ENCODE measurements at regions of chr14 and their contacts with region 1.

Region 1: GRCh38 chr14:89936658-89937185 is 17.8 kb downstream of the EFCAB11 start:
- DNase-seq: no peak
- ATAC-seq: no peak
- H3K4me3 Mint-ChIP-seq: no peak overlapping the region
- H3K27ac Mint-ChIP-seq: no peak overlapping the region
- H3K4me1 Mint-ChIP-seq: no peaks in the 10 kb centered on the region
- H3K27me3 Mint-ChIP-seq: no peaks in the 10 kb centered on the region

Region 2: GRCh38 chr14:89922031-89922907 is 14.5 kb before region 1 on chr14:
- CTCF ChIA-PET with region 1: interaction called, 16 read pairs
- DNase-seq: no peak
- ATAC-seq: no peak
- H3K4me3 Mint-ChIP-seq: no peak overlapping the region
- H3K27ac Mint-ChIP-seq: no peak overlapping the region
- H3K4me1 Mint-ChIP-seq: no peaks in the 10 kb centered on the region
- H3K27me3 Mint-ChIP-seq: no peaks in the 10 kb centered on the region

Region 3: GRCh38 chr14:89954070-89955028 is 17.6 kb after region 1 on chr14 and contains the start of gene EFCAB11:
- CTCF ChIA-PET with region 1: interaction called, 20 read pairs
- DNase-seq: peak; percentile 98
- ATAC-seq: peak; percentile 85
- H3K4me3 Mint-ChIP-seq: peak within 1 kb of the TSS; percentile 93
- H3K27ac Mint-ChIP-seq: peak within 1 kb of the TSS; percentile 90
- H3K4me1 Mint-ChIP-seq: peaks cover 43% of the 10 kb centered on the region
- H3K27me3 Mint-ChIP-seq: no peaks in the 10 kb centered on the region
- total RNA-seq, gene EFCAB11: 11.3 to 12.4 TPM

Region 4: DNA sequence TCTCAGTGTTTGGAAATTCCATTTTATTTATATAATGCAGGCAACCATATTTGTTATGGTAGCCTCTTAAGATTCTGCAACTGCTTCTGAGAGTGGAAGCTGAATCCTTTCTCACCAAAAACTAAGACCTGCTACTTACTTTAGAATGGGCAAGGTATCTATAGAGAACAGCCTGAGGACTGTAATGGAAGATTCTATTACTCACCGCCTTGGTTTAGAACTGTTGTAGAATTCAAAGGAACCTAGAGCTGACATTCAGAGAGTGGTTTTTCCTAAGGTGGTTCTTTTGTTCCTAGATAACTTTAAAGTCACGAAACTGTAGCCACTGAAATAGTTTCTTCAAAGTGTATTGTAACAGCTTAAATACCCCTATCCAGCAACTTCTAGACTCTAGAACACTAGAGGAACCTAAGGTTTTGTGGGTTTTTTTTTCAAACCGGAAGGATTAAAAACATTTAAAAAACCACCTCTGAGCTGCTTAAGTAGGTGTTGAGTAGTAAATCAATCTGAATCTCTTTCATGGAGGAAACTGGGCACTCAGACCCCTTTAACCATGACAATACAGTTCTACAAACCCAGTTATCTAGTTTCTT is 23.2 kb after region 1 on chr14:
- CTCF ChIA-PET with region 1: interaction called, 10 read pairs
- DNase-seq: no peak
- ATAC-seq: peak; percentile 8
- H3K4me3 Mint-ChIP-seq: peak overlapping the region; percentile 14
- H3K27ac Mint-ChIP-seq: peak overlapping the region; percentile 83
- H3K4me1 Mint-ChIP-seq: peaks cover 58% of the 10 kb centered on the region
- H3K27me3 Mint-ChIP-seq: no peaks in the 10 kb centered on the region

Region 5: GRCh38 chr14:89973234-89973823 is 36.6 kb after region 1 on chr14:
- CTCF ChIA-PET with region 1: interaction called, 15 read pairs
- DNase-seq: peak; percentile 69
- ATAC-seq: peak; percentile 65
- H3K4me3 Mint-ChIP-seq: no peak overlapping the region
- H3K27ac Mint-ChIP-seq: no peak overlapping the region
- H3K4me1 Mint-ChIP-seq: no peaks in the 10 kb centered on the region
- H3K27me3 Mint-ChIP-seq: no peaks in the 10 kb centered on the region

Region 6: DNA sequence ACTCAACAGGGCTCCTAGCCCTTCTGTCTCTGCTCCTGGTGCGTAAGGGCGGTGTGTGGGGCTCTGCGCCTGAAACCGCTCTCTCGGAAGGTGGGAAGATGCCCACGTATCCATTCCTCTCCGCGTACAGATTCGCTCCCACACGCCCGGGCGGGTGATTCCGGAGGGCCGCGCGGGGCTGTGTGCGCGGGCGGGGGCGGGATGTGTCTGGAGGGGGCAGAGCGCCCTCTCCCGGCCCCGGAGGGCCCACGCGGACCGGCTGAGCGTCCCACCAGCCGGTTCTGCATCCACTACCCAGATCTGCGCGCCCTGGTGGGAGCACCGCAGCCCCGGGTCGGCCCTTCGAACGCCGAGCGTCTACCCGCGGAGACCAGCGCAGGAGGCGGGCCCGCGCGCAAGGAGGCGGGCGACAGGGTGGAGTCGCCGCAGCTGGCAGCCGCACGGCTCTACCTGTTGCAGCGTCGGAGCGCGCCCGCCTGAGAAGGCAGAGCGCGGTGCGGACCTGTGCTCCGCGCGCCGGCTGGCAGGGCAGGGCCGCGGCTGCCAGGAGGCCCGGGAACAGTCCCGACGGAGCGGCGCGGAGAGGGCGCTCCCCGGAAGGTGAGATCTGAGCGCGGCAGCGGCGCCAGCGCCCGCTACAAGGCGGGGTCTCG is 123.7 kb after region 1 on chr14:
- CTCF ChIA-PET with region 1: interaction called, 11 read pairs
- DNase-seq: peak; percentile 69
- ATAC-seq: peak; percentile 85
- H3K4me3 Mint-ChIP-seq: peak overlapping the region; percentile 70
- H3K27ac Mint-ChIP-seq: no peak overlapping the region
- H3K4me1 Mint-ChIP-seq: peaks cover 24% of the 10 kb centered on the region
- H3K27me3 Mint-ChIP-seq: peaks cover 74% of the 10 kb centered on the region

Region 7: GRCh38 chr14:90235179-90235976 is 298.7 kb after region 1 on chr14:
- CTCF ChIA-PET with region 1: interaction called, 53 read pairs
- DNase-seq: peak; percentile 75
- ATAC-seq: peak; percentile 69
- H3K4me3 Mint-ChIP-seq: no peak overlapping the region
- H3K27ac Mint-ChIP-seq: no peak overlapping the region
- H3K4me1 Mint-ChIP-seq: peaks cover 2% of the 10 kb centered on the region
- H3K27me3 Mint-ChIP-seq: peaks cover 8% of the 10 kb centered on the region

Region 8: GRCh38 chr14:90301668-90302090 is 365.0 kb after region 1 on chr14:
- CTCF ChIA-PET with region 1: no interaction called
- DNase-seq: no peak
- ATAC-seq: peak; percentile 33
- H3K4me3 Mint-ChIP-seq: no peak overlapping the region
- H3K27ac Mint-ChIP-seq: no peak overlapping the region
- H3K4me1 Mint-ChIP-seq: peaks cover 14% of the 10 kb centered on the region
- H3K27me3 Mint-ChIP-seq: no peaks in the 10 kb centered on the region

Measured in activated CD8-positive, alpha-beta memory T cell treated with anti-CD3 and anti-CD28 coated beads, Interleukin-2, amount 10 ng/mL, durations not matched to agents 7 days and 5 days (primary cell).